Activated B cell treated with CpG ODN at 0.5 μM for 24 hours (primary cell): ENCODE measurements at regions of chr14 and their contacts with region 1.

Region 1: DNA sequence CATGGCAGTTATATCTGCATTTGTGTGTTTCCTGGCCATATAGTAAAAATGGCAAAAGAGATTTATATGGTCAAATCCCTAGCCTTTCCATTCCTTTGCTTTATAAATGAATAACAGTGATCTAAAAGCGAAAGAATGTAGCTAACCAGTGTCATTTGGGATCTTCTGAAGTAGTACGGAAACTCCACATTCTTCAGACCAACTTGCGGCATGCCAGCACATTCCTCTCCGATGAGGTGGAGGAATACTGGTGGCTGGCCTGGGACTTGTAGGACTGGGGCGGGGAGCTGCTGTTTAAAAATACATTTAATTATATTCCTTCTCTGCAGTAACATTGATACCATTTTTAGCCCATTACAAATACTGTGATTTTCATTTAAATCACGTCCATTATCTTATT is 85.3 kb downstream of the SAMD4A start:
- DNase-seq: no peak
- ATAC-seq: no peak
- H3K4me3 Mint-ChIP-seq: no peak overlapping the region
- H3K27ac Mint-ChIP-seq: no peak overlapping the region
- H3K4me1 Mint-ChIP-seq: peaks cover 5% of the 10 kb centered on the region
- H3K27me3 Mint-ChIP-seq: no peaks in the 10 kb centered on the region
- CTCF ChIP-seq: no peak

Region 2: DNA sequence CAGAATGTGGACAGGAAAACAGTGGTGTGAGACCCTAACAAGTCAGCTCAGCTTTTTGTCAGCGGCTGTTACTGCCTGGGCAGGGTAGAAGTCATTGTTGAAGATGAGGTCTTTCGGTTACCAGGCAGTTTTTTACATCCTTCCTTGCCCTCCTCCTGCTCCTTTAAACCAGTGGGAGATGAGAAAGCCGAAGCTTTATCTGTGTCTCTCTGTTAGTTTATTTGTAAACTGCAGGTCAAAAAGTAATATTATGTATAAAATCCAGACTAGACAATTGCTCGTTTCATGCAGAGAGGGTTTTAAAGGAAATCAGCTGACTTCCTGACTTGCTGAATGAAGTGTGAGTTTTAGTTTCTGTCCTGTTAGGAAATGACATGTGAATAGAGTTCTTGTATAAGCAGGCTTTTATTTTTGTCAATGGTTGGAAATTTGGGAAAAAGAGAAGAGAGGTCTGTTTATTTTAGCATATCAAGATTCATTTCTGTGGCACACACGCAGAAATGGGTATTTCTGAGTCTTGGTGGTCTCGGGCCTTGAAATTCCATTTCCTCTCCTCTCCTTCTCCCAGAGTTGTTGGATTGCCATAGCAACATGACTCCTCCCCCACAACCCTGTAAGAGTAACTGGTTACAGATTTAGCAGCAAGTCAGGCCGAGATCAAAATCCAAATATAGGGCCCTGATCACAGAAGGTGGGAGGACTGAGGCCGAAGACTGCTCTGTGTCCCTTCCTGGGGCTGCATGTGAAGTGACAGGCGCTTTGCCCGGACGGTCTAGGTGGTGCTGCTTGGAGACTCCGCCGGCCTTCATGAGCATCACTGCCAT is 24.4 kb before region 1 on chr14:
- CTCF ChIA-PET with region 1: no interaction called
- POLR2A ChIA-PET with region 1: no interaction called
- intact Hi-C with region 1: no loop called
- DNase-seq: no peak
- ATAC-seq: peak; percentile 69
- H3K4me3 Mint-ChIP-seq: peak overlapping the region; percentile 79
- H3K27ac Mint-ChIP-seq: peak overlapping the region; percentile 91
- H3K4me1 Mint-ChIP-seq: peaks cover 51% of the 10 kb centered on the region
- H3K27me3 Mint-ChIP-seq: no peaks in the 10 kb centered on the region
- CTCF ChIP-seq: no peak

Region 3: DNA sequence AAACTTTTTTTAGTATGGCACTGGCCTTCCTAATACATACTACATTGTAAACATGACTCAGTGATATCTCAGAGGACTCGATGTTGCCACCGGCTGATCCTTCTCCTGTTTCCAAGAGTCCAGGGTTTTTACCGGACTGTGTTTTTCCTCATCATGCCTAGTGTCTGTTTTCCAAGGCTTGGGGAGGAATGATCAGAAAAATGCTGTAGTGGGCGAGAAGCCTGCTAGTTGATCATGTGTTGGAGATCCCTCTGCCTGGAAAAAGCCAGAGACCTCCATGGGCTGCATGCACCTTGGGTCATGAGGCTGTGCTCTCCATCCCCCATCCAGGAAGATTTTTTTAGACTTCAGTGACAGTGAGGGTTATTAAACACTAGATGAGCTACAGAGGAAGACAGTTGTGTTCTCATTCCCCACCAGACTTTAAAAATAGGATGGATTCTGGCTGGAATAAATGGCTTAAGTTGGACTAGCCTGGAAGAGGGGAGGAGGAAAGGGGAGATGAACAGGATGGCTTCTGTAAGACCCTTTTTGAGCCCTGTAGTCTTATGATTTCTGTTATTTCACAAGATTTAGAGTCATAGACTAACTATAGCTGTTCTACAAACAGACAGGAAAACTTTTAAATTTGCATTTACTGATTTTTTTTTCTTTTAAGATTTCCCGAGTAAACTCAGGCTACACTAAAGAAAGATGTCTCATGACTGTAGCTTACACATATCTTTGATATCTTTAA is 60.4 kb after region 1 on chr14:
- CTCF ChIA-PET with region 1: no interaction called
- POLR2A ChIA-PET with region 1: no interaction called
- intact Hi-C with region 1: loop called (anchors 5 kb)
- DNase-seq: no peak
- ATAC-seq: no peak
- H3K4me3 Mint-ChIP-seq: peak overlapping the region; percentile 63
- H3K27ac Mint-ChIP-seq: peak overlapping the region; percentile 77
- H3K4me1 Mint-ChIP-seq: peaks cover 27% of the 10 kb centered on the region
- H3K27me3 Mint-ChIP-seq: no peaks in the 10 kb centered on the region
- CTCF ChIP-seq: no peak

Region 4: GRCh38 chr14:54922598-54922997 is 270.4 kb after region 1 on chr14:
- CTCF ChIA-PET with region 1: no interaction called
- POLR2A ChIA-PET with region 1: no interaction called
- intact Hi-C with region 1: no loop called
- DNase-seq: no peak
- ATAC-seq: no peak
- H3K4me3 Mint-ChIP-seq: no peak overlapping the region
- H3K27ac Mint-ChIP-seq: no peak overlapping the region
- H3K4me1 Mint-ChIP-seq: no peaks in the 10 kb centered on the region
- H3K27me3 Mint-ChIP-seq: no peaks in the 10 kb centered on the region
- CTCF ChIP-seq: no peak